Head of caudate nucleus (tissue), 42 donors: ENCODE measurements at regions of chr2 and their contacts with region 1.

Region 1: DNA sequence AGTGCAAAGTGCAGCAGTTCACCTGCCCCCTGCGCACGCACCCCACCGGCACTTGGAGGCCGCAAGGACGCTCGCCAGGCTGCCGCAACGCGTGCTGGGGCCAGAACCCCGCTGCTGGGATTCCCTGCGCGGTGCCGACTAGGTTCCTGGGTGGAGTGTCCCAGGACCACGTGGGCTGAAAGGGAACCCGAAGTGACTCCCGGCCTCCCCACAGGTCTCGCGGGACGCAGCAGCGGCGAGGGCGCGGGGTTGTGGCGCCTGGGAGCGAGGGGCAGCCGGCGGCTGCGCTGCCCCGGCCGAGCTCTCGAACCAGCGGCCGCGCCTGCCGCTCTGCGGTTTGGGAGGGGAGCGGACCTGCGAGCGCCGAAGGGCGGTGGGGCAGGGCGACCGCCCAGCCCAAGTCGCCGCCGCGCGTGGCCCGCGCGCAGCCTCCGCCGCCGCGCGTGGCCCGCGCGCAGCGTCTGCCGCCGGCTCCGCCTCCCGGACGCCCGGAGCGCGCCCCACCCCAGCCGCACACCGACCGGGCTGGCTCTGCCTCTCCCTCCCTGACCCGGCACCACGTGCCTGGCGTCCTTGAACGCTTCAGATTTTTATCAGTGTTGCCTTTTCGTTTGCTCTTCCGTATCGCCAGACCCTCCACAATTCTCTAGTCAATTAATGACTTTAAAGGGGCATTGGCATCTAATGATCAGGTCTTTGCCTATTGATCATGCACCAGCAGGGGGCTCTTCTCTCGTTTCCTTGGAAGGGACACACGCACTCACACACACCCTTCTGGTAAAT is at the start of gene FTCDNL1:
- DNase-seq: peak; percentile 55 to 93 (median 84)

Region 2: DNA sequence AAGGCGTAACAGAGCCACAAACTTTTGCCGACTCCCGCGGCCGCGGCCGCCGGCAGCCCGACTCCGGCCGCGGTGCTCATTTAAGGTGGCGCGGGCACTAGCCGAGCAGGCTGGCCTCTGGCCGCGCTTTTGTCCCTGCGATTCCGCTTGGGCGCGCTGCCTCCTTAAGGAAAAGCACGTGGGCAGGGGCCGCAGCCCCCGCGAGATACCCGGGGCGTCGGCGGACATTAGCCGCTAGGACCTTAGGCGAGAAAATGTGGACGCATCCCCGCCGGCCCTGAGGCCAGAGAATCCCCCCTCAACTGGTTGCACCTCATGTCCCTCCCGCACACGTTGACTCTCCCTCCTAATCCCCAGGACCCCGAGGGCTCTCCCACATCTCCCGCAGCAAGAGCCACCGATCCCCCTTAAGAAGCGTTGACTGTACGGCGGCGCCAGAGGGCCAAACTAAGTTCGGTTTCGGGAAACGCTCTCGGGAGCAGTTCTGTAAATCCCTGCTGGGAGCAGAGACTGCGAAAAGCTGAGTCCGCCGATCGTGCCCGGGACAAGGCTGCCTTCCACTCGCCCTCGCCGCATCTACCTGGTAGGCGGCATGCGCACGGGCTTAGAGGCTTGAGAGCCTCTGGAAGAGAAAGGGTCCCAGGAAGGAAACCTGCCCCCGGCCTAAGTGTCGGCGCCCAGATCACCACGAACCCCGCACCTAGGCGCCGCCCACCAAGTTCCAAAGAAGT is 391.5 kb before region 1 on chr2:
- intact Hi-C with region 1: loop called (anchors 10 kb)
- DNase-seq: peak; percentile 88 to 99 (median 96)

Region 3: DNA sequence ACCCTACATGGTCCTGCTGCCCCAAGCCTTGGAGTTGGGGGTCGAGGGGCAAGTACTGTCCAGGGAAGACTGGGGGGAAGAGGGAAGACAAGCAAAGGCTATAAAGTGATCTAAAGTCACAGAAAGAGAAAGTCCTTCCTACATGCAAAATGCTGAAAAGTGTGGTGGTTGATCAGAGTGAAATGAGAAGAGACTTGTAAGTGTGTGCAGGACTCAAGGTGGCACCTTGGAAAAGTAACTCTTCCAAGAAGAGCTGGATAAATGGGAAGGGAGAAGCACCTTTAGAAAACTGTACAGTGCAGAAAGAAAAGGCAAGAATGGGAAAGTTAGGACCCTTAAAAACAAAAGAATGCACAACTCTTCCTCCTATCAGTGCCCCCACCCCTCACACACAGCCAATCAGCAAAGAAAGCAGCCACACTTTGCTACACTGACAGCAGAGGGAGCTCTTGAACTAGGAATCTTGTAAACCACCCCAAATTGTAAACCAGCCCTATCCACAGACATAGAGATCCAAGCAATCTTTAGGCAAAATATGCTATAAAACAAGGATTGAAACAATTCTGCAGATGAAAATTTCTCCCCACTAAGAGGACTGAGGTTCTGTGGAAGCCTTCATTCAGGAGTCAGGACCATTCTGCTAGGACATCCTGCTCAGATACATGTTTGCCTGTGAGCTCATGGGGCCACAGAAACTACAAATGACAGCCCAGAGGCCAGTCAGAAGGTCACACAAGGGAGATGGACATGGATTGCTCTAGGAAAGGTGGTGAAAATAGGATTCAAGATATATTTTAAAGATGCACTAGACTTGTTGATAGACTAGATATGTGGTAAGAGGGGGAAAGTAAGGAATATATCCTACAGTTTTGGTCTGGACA is 146.3 kb before region 1 on chr2:
- intact Hi-C with region 1: loop called (anchors 5 kb)
- DNase-seq: peak in 31 of 42 donors; percentile 11 to 78 (median 37)

Region 4: DNA sequence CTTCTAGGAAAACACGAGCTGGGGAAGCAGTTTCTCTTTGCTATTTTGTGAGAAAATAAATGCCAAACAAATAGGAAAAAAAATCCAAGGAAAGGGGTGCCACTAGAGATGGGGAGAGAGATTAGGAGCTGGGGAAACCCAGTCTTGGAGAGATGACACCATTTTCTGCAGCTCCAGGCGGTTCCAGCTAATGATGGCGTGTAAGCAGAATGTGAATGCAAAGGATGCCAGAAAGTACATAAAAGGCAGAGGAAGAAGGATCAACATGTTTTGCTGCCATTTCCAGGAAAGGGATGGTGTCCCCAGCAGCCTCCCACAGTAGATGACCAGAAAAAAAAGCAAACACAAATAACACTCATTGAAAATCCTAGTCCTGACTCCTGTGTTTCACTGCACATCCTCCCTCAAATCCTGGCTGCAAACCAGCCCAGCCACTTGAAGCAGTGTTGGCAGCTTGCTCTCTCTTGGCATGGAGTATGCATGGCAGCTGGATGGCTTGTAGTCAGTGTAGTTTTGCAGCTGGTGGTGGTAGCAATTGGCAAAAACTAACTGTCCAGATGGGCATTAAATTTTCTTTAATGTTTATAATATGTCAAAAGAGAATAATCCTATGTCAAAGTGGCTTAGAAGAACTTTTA is 93.6 kb before region 1 on chr2:
- intact Hi-C with region 1: no loop called
- DNase-seq: peak; percentile 54 to 95 (median 88)

Region 5: GRCh38 chr2:199798831-199799580 is 51.9 kb before region 1 on chr2:
- intact Hi-C with region 1: loop called (anchors 5 kb)
- DNase-seq: peak; percentile 51 to 91 (median 74)

Region 6: DNA sequence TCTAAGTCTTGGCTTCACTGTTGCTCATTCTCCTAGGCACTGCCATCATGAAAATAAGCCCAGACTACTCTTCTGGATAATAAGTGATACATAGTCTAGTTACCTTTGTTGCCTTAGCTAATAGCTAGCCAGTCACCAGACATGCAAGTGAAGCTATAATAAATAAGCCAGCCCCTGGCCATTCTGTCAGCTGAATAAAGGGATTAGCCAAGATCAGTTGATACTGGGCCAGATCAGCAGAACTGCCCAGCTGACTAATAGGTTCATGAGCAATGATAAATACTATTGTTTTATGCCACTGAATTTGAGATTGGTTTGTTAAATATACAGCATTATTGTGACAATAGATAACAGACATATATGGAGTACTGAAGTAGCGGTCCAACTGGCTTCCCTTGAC is 52.2 kb after region 1 on chr2:
- intact Hi-C with region 1: loop called (anchors 10 kb)
- DNase-seq: no peak